Left lung (tissue), 14 donors: ENCODE measurements at regions of chr12 and their contacts with region 1.

Region 1: GRCh38 chr12:9237286-9237685 is 29.1 kb upstream of the PZP start:
- DNase-seq: no peak
- ATAC-seq: no peak
- H3K4me3 ChIP-seq: no peak overlapping the region
- H3K27ac ChIP-seq: no peak overlapping the region
- H3K4me1 ChIP-seq: no peaks in the 10 kb centered on the region
- H3K27me3 ChIP-seq: peaks cover 0 to 11% of the 10 kb centered on the region in 2 donors
- CTCF ChIP-seq: no peak

Region 2: GRCh38 chr12:9079883-9080675 is 157.2 kb before region 1 on chr12:
- intact Hi-C with region 1: no loop called
- DNase-seq: no peak
- ATAC-seq: no peak
- H3K4me3 ChIP-seq: no peak overlapping the region
- H3K27ac ChIP-seq: no peak overlapping the region
- H3K4me1 ChIP-seq: no peaks in the 10 kb centered on the region
- H3K27me3 ChIP-seq: no peaks in the 10 kb centered on the region
- CTCF ChIP-seq: no peak

Region 3: DNA sequence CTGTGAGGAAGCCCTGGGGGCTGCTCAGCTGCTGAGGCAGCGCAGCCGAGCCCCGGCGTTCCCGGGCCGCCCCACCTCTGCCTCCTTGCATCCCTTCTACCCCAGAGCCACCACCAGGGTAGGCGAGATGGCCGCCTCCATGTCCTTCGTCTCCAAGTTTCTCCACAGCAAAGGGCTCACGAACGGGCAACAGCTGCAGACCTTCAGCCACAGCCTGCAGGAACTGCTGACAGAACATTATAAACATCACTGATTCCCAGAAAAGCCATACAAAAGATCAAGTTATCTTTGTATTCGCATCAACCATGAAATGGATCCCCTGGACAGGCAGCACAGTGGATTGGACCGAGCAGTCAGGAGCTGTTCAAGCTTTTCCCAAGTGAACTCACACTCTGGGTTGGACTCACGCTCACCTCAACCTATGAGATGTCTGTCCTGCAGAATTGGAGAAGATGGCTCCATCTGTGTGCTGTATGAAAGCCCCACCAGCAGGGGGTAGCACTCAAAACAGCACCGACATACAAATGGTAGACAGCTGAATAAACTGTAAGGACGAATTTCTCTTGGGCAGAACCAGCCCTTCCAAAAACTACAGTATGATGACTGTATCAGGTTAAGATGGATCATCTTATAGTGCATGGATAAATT is 102.2 kb before region 1 on chr12:
- intact Hi-C with region 1: loop called in 1 of 2 experiments (anchors 10 kb)
- DNase-seq: peak; percentile 37 to 93 (median 80)
- ATAC-seq: peak; percentile 50
- H3K4me3 ChIP-seq: no peak overlapping the region
- H3K27ac ChIP-seq: peak overlapping the region in 1 of 2 donors; percentile 68
- H3K4me1 ChIP-seq: peaks cover 0 to 4% of the 10 kb centered on the region in 2 donors
- H3K27me3 ChIP-seq: no peaks in the 10 kb centered on the region
- CTCF ChIP-seq: peak in 1 of 2 donors; percentile 38